Posterior vena cava (tissue), 2 donors: ENCODE measurements at regions of chr4 and their contacts with region 1.

Region 1: GRCh38 chr4:869776-870175 is 43.8 kb upstream of the CPLX1 start:
- DNase-seq: no peak

Region 2: GRCh38 chr4:848796-849477 is 20.8 kb before region 1 on chr4:
- intact Hi-C with region 1: loop called in 1 of 2 experiments (anchors 1 kb)
- DNase-seq: no peak